Mammary epithelial cell (primary cell): ENCODE measurements at regions of chr4 and their contacts with region 1.

Region 1: GRCh38 chr4:5710961-5711478 is at the start of gene EVC:
- DNase-seq: peak; percentile 58
- H3K4me3 ChIP-seq: peak within 1 kb of the TSS; percentile 49 to 78 (median 51)
- H3K27ac ChIP-seq: peak within 1 kb of the TSS; percentile 44
- H3K4me1 ChIP-seq: peaks cover 45% of the 10 kb centered on the region
- H3K27me3 ChIP-seq: no peaks in the 10 kb centered on the region
- CTCF ChIP-seq: peak in 1 of 2 donors; percentile 9
- total RNA-seq, gene EVC: 29.1 to 38.5 TPM

Region 2: DNA sequence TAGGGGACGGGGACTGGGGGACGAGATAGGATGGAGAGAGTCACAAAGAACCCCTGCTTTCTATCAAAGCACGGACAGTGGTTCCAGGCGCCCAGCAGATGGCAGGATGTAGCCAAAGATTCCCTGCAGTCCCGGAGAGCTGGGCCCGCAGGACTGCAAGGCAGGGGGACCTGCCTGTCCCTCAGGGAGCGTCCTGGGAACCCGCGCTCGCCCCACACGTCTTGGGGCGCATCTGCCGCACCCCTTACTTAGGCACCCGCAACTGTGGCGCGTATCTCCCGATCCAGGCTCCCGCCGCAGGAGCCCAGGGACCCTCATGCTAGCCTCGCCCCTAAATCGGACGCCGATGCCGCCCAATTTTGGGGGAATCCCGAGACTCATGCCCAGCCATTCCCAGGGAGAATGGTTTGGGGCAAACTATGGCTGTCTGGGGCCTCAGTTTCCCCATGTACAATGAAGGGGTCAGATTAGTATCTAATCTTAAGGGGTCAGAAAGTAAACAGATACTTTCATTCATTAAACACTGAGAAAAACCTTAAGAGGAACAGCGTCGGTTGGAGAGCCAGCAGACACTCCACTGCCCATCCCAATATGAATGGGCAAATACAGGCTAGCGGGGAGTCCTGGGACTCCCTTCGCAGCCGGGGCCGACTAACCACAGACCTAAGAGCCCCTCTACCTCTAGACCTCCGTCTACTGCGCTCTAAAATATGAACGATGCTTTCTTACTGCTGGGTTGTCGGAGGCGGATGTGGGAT is 660.3 kb before region 1 on chr4:
- CTCF ChIA-PET with region 1: no interaction called
- dilution Hi-C with region 1: no loop called
- in situ Hi-C with region 1: no loop called
- intact Hi-C with region 1: loop called (anchors 5 kb)
- DNase-seq: peak; percentile 63
- H3K4me3 ChIP-seq: peak overlapping the region; percentile 46 to 59 (median 53)
- H3K27ac ChIP-seq: no peak overlapping the region
- H3K4me1 ChIP-seq: peaks cover 12% of the 10 kb centered on the region
- H3K27me3 ChIP-seq: no peaks in the 10 kb centered on the region
- CTCF ChIP-seq: peak; percentile 59 to 81

Region 3: GRCh38 chr4:5409972-5410618 is 300.9 kb before region 1 on chr4:
- CTCF ChIA-PET with region 1: no interaction called
- dilution Hi-C with region 1: no loop called
- in situ Hi-C with region 1: no loop called
- intact Hi-C with region 1: no loop called
- DNase-seq: peak; percentile 4
- H3K4me3 ChIP-seq: peak overlapping the region in 1 of 3 experiments; percentile 8
- H3K27ac ChIP-seq: no peak overlapping the region
- H3K4me1 ChIP-seq: no peaks in the 10 kb centered on the region
- H3K27me3 ChIP-seq: no peaks in the 10 kb centered on the region
- CTCF ChIP-seq: peak in 1 of 2 donors; percentile 37

Region 4: GRCh38 chr4:5497489-5497888 is 213.5 kb before region 1 on chr4:
- CTCF ChIA-PET with region 1: no interaction called
- dilution Hi-C with region 1: no loop called
- in situ Hi-C with region 1: no loop called
- intact Hi-C with region 1: no loop called
- DNase-seq: no peak
- H3K4me3 ChIP-seq: no peak overlapping the region
- H3K27ac ChIP-seq: no peak overlapping the region
- H3K4me1 ChIP-seq: no peaks in the 10 kb centered on the region
- H3K27me3 ChIP-seq: no peaks in the 10 kb centered on the region
- CTCF ChIP-seq: no peak

Region 5: GRCh38 chr4:5635826-5636195 is 75.2 kb before region 1 on chr4:
- CTCF ChIA-PET with region 1: no interaction called
- dilution Hi-C with region 1: no loop called
- in situ Hi-C with region 1: no loop called
- intact Hi-C with region 1: loop called (anchors 2 kb)
- DNase-seq: peak; percentile 87
- H3K4me3 ChIP-seq: no peak overlapping the region
- H3K27ac ChIP-seq: peak overlapping the region; percentile 79
- H3K4me1 ChIP-seq: peaks cover 50% of the 10 kb centered on the region
- H3K27me3 ChIP-seq: no peaks in the 10 kb centered on the region
- CTCF ChIP-seq: no peak

Region 6: DNA sequence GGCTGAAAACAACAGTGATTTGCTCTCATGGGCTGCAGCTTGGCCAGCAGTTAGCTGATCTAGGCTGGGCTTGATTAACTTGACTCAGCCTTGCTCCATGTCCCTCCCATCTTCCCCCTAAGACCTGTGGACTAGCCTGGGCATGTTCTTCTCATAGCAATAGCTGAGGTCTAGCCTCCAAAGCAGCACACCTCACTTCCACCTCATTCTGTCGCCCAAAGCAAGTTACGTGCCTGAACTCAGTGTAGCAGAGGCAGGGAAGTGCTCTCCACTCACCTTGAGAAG is 62.2 kb after region 1 on chr4:
- CTCF ChIA-PET with region 1: no interaction called
- dilution Hi-C with region 1: loop called (anchors 5 kb)
- in situ Hi-C with region 1: no loop called
- intact Hi-C with region 1: loop called (anchors 5 kb)
- DNase-seq: peak; percentile 98
- H3K4me3 ChIP-seq: no peak overlapping the region
- H3K27ac ChIP-seq: peak overlapping the region; percentile 89
- H3K4me1 ChIP-seq: peaks cover 26% of the 10 kb centered on the region
- H3K27me3 ChIP-seq: no peaks in the 10 kb centered on the region
- CTCF ChIP-seq: no peak

Region 7: GRCh38 chr4:5791654-5792053 is 80.6 kb after region 1 on chr4:
- CTCF ChIA-PET with region 1: no interaction called
- dilution Hi-C with region 1: no loop called
- in situ Hi-C with region 1: no loop called
- intact Hi-C with region 1: loop called (anchors 1 kb)
- DNase-seq: no peak
- H3K4me3 ChIP-seq: no peak overlapping the region
- H3K27ac ChIP-seq: no peak overlapping the region
- H3K4me1 ChIP-seq: no peaks in the 10 kb centered on the region
- H3K27me3 ChIP-seq: no peaks in the 10 kb centered on the region
- CTCF ChIP-seq: no peak

Region 8: DNA sequence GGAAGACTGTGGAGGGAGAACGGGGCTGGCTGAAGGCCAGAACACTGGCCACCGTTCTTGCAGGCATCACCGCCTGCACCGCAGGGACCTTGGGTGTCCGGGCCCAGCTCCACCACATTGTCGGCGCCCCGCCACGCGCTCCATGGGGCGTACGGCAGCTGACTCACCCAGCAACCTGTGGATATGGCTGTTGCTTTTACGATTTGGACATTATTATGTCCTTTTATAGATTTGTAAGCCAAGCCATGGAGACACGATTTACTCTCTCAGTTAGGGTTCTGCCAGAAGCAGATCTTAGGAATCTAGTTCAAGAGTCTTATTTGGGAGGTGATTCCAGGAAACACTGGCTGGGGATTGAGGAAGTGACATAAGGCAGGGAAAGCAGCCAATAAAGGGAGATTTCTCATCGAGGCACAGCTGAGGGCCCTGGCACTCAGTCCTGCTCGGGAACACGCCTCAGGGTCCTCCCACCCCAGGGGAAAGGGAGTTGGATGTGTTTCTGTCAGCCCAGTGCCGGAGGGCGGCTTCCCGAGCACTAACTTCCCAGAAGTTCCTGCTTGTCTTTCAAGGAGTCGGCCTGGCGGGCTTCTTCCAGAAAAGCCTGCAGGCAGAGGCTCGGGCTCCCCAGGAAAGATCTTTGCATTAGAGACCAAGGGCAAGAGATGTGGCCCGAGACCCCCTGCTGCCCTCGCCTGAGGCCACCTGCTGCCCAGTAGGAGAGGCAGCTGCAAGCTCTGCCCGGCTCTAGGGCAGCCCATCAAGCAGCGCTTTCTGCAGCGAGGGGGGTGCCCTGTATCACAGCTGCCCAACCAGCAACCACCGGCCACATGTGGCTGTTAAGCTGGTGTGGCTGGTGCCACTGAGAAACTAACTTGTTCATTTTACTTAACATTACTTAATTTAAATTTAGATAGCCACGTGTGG is 129.0 kb after region 1 on chr4:
- CTCF ChIA-PET with region 1: no interaction called
- dilution Hi-C with region 1: no loop called
- in situ Hi-C with region 1: no loop called
- intact Hi-C with region 1: no loop called
- DNase-seq: no peak
- H3K4me3 ChIP-seq: no peak overlapping the region
- H3K27ac ChIP-seq: no peak overlapping the region
- H3K4me1 ChIP-seq: no peaks in the 10 kb centered on the region
- H3K27me3 ChIP-seq: peaks cover 2% of the 10 kb centered on the region
- CTCF ChIP-seq: no peak